ENCODE measurements at regions of chr1 and their contacts with region 1.

Region 1: GRCh38 chr1:193456811-193457280 is 270.4 kb upstream of the B3GALT2 start:
- DNase-seq: no peak
- H3K4me3 Mint-ChIP-seq: no peak overlapping the region
- H3K27ac Mint-ChIP-seq: no peak overlapping the region
- H3K4me1 Mint-ChIP-seq: peaks cover 29% of the 10 kb centered on the region
- H3K27me3 Mint-ChIP-seq: no peaks in the 10 kb centered on the region

Region 2: DNA sequence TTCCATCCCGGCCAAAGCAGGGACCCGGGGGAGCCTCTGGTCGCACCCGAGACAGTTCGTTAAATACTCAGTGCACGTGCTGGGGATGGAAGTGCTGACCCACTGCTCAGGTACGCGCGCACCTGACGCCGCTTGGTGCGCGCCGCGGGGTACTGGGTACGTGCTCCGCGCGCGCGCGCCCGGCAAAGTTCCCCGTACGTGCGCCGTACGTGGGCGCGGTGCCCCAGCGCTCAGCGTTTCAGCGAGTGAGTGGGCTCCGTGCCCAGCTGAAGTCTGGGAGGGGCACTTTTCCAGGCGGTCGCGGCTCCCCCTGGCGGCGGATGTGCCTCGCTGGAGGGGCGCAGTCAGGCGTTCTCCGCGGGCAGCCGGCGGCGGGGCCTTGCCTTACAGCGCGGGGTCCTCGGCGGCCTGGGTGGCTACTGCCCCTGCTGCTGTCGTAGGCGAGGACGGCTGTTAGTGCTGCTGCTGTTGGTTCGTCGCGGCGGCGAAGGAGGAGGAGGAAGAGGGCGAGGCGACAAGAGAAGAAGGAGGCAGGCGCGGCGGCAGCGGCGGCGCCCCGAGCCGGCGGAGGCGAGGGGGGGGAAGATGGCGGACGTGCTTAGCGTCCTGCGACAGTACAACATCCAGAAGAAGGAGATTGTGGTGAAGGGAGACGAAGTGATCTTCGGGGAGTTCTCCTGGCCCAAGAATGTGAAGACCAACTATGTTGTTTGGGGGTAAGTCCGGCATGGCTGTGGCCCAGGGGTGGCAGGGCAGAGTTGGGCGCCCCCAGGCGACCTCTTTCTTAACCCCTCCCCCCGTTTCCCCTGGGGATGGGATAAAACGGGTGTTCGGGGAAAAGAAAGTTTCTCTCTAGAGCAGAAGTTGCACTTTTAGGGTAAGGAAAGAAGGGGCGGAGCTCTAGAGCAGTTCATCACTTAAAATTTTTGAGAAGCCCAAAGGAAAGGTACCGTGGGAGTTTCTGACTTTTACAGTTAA is 334.9 kb before region 1 on chr1 and contains the start of gene CDC73:
- CTCF ChIA-PET with region 1: interaction called, 3 read pairs
- POLR2A ChIA-PET with region 1: no interaction called
- intact Hi-C with region 1: loop called (anchors 5 kb)
- DNase-seq: peak; percentile 99
- H3K4me3 Mint-ChIP-seq: peak within 1 kb of the TSS; percentile 85
- H3K27ac Mint-ChIP-seq: peak within 1 kb of the TSS; percentile 98
- H3K4me1 Mint-ChIP-seq: peaks cover 45% of the 10 kb centered on the region
- H3K27me3 Mint-ChIP-seq: no peaks in the 10 kb centered on the region
- total RNA-seq, gene CDC73: 47.9 to 49.3 TPM

Region 3: GRCh38 chr1:193377472-193377871 is 79.4 kb before region 1 on chr1:
- CTCF ChIA-PET with region 1: no interaction called
- POLR2A ChIA-PET with region 1: no interaction called
- intact Hi-C with region 1: no loop called
- DNase-seq: no peak
- H3K4me3 Mint-ChIP-seq: no peak overlapping the region
- H3K27ac Mint-ChIP-seq: no peak overlapping the region
- H3K4me1 Mint-ChIP-seq: no peaks in the 10 kb centered on the region
- H3K27me3 Mint-ChIP-seq: no peaks in the 10 kb centered on the region

Region 4: GRCh38 chr1:193406901-193407300 is 49.9 kb before region 1 on chr1:
- CTCF ChIA-PET with region 1: interaction called, 4 read pairs
- POLR2A ChIA-PET with region 1: interaction called, 3 read pairs
- intact Hi-C with region 1: loop called (anchors 1 kb)
- DNase-seq: no peak
- H3K4me3 Mint-ChIP-seq: no peak overlapping the region
- H3K27ac Mint-ChIP-seq: no peak overlapping the region
- H3K4me1 Mint-ChIP-seq: peaks cover 29% of the 10 kb centered on the region
- H3K27me3 Mint-ChIP-seq: no peaks in the 10 kb centered on the region

Region 5: DNA sequence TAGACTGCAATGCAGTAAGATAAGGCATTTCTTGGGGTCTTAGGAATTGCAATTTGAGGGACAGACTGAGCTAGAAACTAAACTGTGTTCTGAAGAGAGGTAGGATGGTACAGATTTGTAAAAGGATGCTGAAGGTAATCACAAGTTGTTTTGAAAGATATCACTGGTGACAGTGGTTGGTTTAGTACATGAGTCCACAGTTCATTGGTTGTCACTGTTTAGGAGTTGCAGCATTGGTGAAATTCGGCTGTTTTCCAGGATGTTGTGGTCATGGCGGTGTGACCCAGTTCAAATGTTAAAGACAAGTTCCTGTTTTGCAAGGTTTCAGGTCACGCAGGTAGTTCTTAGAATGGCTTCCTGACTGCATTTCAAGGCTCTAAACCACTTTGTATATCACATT is 22.3 kb after region 1 on chr1:
- CTCF ChIA-PET with region 1: interaction called, 4 read pairs
- POLR2A ChIA-PET with region 1: interaction called, 5 read pairs
- intact Hi-C with region 1: loop called (anchors 1 kb)
- DNase-seq: peak; percentile 86
- H3K4me3 Mint-ChIP-seq: peak overlapping the region; percentile 11
- H3K27ac Mint-ChIP-seq: peak overlapping the region; percentile 81
- H3K4me1 Mint-ChIP-seq: peaks cover 53% of the 10 kb centered on the region
- H3K27me3 Mint-ChIP-seq: no peaks in the 10 kb centered on the region

Region 6: GRCh38 chr1:193592317-193592716 is 135.5 kb after region 1 on chr1:
- CTCF ChIA-PET with region 1: no interaction called
- POLR2A ChIA-PET with region 1: no interaction called
- intact Hi-C with region 1: loop called (anchors 2 kb)
- DNase-seq: no peak
- H3K4me3 Mint-ChIP-seq: no peak overlapping the region
- H3K27ac Mint-ChIP-seq: no peak overlapping the region
- H3K4me1 Mint-ChIP-seq: peaks cover 22% of the 10 kb centered on the region
- H3K27me3 Mint-ChIP-seq: no peaks in the 10 kb centered on the region

Region 7: DNA sequence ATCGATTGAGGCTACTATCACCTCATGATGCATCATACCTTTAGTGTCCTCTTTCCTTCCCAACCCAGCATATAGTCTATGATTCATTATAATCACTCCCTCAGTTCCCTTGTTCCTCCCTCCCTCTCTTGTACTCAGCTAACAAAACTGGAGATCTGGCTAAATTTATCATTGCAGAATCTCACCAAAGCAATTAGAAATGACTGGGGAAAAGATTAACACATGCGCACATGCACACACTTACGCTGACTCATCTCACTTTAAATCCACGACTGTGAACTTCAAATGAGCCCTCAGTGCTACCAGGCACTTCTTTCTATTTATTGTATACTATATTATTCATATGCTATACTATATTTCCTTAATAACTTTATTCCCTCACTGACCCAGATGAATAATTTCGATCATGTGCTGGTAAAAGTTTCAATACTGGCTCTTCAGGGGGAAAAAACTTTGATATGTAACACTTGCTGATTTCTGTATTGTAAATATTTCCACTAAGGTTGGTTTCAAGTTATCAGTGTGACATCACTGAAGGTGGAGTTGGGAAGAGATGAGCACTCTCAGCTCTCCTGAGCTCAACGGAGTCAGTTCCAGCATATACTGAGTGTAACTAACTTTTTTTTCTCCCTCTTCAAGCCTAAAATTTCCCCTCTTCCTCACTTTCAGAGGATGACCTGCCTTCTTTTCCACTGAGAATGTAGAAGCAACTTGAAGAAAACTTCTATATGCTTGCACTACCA is 343.3 kb after region 1 on chr1:
- CTCF ChIA-PET with region 1: no interaction called
- POLR2A ChIA-PET with region 1: no interaction called
- intact Hi-C with region 1: loop called (anchors 1 kb)
- DNase-seq: no peak
- H3K4me3 Mint-ChIP-seq: no peak overlapping the region
- H3K27ac Mint-ChIP-seq: no peak overlapping the region
- H3K4me1 Mint-ChIP-seq: peaks cover 13% of the 10 kb centered on the region
- H3K27me3 Mint-ChIP-seq: no peaks in the 10 kb centered on the region

Region 8: GRCh38 chr1:193831465-193831864 is 374.6 kb after region 1 on chr1:
- CTCF ChIA-PET with region 1: no interaction called
- POLR2A ChIA-PET with region 1: no interaction called
- intact Hi-C with region 1: no loop called
- DNase-seq: no peak
- H3K4me3 Mint-ChIP-seq: no peak overlapping the region
- H3K27ac Mint-ChIP-seq: no peak overlapping the region
- H3K4me1 Mint-ChIP-seq: no peaks in the 10 kb centered on the region
- H3K27me3 Mint-ChIP-seq: no peaks in the 10 kb centered on the region